ENCODE measurements at regions of chr6 and their contacts with region 1.

Region 1: GRCh38 chr6:52650941-52651340 is 20.0 kb upstream of the TMEM14A start:
- DNase-seq: no peak
- H3K4me3 ChIP-seq: no peak overlapping the region
- H3K27me3 ChIP-seq: no peaks in the 10 kb centered on the region
- CTCF ChIP-seq: no peak

Region 2: GRCh38 chr6:52577022-52577777 is 73.7 kb before region 1 on chr6 and contains the start of gene TRAM2:
- CTCF ChIA-PET with region 1: interaction called, 18 read pairs
- POLR2A ChIA-PET with region 1: no interaction called
- DNase-seq: no peak
- H3K4me3 ChIP-seq: peak within 1 kb of the TSS; percentile 91
- H3K27me3 ChIP-seq: no peaks in the 10 kb centered on the region
- CTCF ChIP-seq: 0 out of 2 replicates have a peak, but pooled peaks have one; percentile 9
- polyA plus RNA-seq, gene TRAM2: 134 and 146 TPM in 2 replicates

Region 3: GRCh38 chr6:52590152-52590931 is 60.6 kb before region 1 on chr6:
- CTCF ChIA-PET with region 1: interaction called, 25 read pairs
- POLR2A ChIA-PET with region 1: no interaction called
- DNase-seq: peak; percentile 61
- H3K4me3 ChIP-seq: no peak overlapping the region
- H3K27me3 ChIP-seq: no peaks in the 10 kb centered on the region
- CTCF ChIP-seq: no peak; the same call in 1 of the 2 replicates

Region 4: GRCh38 chr6:52598123-52598823 is 52.7 kb before region 1 on chr6:
- CTCF ChIA-PET with region 1: interaction called, 25 read pairs
- POLR2A ChIA-PET with region 1: no interaction called
- DNase-seq: no peak
- H3K4me3 ChIP-seq: no peak overlapping the region
- H3K27me3 ChIP-seq: no peaks in the 10 kb centered on the region
- CTCF ChIP-seq: peak; percentile 82

Region 5: DNA sequence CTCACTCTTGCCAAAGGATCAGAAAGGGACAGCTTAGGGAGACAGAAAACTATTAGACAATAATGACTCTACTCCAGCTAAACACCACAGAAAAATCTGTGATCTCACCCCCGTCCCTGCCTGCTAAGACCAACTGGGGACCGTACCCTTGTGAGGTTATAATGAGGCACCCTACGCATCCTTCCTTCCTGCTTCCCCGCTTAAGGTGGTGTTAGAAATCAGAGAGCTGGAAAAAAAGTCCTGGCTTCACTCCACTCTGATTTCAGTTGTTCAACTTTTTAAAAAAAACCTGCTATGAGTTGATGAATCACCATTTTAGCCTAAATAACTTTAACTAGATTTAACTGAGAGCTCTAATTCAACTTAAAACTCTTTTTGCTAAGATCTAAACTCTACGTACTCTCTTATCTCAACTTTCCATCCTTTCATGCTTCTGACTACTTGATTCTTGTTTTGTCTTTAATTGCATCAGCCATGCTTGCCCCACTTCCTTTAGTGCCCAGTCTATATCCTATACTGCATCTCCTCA is 15.8 kb before region 1 on chr6:
- CTCF ChIA-PET with region 1: interaction called, 37 read pairs
- POLR2A ChIA-PET with region 1: no interaction called
- DNase-seq: no peak
- H3K4me3 ChIP-seq: no peak overlapping the region
- H3K27me3 ChIP-seq: no peaks in the 10 kb centered on the region
- CTCF ChIP-seq: no peak

Region 6: GRCh38 chr6:52640170-52640569 is 10.8 kb before region 1 on chr6:
- CTCF ChIA-PET with region 1: interaction called, 37 read pairs
- POLR2A ChIA-PET with region 1: interaction called, 5 read pairs
- DNase-seq: no peak
- H3K4me3 ChIP-seq: no peak overlapping the region
- H3K27me3 ChIP-seq: no peaks in the 10 kb centered on the region
- CTCF ChIP-seq: no peak

Region 7: DNA sequence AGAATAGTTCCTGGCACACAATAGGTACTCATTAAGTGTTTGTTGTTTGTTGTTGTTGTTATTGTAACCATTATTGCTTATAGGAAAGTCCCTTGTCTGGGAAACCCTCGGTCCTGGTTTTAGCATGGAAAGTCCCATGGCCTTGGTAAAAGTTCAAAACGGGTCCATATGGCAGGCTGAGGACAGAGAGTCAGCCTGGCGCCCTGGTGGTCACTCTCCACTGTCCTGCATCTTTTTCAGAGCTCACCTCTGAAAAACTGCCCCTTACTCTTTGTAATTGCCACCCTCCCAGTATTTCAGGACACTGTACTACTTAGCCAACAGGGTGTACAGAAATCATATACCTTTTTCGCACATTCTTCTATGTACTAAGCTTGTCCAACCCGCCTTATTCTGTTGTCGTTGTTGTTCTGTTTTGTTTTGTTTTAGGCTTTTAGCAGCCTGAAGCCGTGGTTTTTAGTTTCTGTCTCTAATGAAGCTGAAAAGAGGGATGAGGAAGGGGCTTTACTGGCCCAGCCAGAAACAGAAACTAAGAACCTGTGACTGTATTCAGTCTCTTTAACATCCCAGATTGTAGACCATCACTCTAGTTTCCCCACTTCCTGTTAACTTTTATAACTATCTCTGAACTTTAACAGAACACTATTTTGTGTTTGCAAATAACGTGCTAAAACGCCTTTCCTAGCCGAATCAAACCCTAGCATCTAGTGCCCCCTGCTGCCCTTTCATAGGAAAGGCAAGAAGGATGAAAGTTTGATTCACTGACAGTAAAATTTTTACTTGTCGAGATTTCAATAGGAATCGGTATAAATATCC is 12.4 kb after region 1 on chr6:
- CTCF ChIA-PET with region 1: interaction called, 52 read pairs
- POLR2A ChIA-PET with region 1: no interaction called
- DNase-seq: peak; percentile 29
- H3K4me3 ChIP-seq: peak overlapping the region; percentile 82
- H3K27me3 ChIP-seq: no peaks in the 10 kb centered on the region
- CTCF ChIP-seq: peak; percentile 76